Activated naive CD4-positive, alpha-beta T cell treated with anti-CD3 and anti-CD28 coated beads for 36 hours (primary cell): ENCODE measurements at regions of chr14 and their contacts with region 1.

Region 1: DNA sequence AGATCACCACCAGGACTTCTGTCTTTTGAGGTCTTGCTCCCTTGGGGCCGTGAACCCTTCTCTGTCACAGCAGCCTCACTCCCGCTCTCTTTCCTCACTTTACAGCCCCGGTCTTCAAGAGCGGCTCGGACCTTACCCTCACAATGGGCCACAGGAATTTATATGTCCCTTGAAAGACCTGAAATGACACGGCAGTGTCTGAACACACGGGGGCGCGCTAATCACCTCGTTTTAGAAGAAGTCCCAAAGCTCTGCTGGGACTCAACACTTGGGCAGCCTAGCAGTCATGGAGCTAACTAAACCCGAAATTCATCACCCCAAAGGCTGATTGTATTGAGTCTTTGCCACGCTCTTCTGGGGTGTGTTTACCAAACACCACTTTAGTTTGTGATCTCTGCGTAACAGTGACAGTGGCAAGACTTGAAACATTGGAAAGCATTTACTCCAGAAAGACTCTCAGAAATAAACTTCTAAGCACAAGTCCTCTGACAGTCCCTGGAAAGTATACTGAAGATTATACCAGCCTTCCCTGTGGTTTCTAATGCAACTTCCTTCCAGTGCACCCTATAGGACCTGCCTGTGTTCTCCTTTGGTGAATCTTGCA is 29.0 kb downstream of the SERPINA11 start:
- DNase-seq: peak; percentile 79
- H3K4me3 Mint-ChIP-seq: no peak overlapping the region
- H3K27ac Mint-ChIP-seq: no peak overlapping the region
- H3K4me1 Mint-ChIP-seq: no peaks in the 10 kb centered on the region
- H3K27me3 Mint-ChIP-seq: peaks cover 25% of the 10 kb centered on the region

Region 2: DNA sequence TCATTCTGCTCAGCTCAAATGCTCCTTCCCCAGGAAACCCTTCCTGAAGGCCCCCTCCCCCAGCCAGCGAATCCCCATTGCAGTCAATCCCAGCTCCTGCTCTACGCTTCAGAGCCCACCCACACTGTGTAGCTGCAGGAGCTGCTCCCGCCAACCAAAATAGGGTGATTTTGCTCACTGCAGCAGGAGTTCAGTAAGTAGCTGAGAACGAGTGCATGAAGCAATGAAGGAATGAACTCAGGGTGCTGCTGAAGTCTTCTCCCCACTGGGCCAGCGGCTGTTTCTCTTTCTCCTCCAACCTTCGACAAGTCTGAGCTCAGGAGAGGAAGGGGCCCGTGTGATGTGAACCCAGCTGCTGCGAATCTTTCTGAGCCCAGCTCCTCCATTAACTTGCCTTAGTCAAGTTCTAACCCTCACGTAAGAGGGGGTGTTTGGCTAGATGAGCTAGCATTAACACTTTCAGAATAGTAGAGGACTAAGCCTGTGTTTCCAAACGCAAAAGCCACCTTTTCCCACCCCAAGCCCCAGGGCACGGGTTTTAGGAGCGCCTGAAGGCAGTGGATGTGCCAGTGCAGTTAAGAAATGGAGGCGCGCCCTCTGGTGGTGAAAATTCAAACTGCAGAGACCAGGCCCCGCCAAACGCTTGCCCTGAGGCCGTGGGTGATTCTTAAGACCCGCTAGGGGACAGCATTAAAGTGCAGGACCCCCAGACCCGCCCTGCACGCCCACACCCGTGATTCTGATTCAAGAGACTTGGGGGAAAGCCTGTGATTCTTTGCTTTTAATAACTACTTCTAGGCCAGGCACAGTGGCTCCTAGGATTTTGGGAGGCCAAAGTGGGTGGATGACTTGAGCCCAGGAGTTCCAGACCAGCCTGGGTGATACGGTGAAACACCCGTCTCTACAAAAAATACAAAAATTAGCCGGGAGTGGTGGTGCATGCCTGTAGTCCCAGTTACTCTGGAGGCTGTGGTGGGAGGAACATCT is 125.7 kb after region 1 on chr14:
- CTCF ChIA-PET with region 1: interaction called, 4 read pairs
- intact Hi-C with region 1: loop called (anchors 2 kb)
- DNase-seq: peak; percentile 75
- H3K4me3 Mint-ChIP-seq: no peak overlapping the region
- H3K27ac Mint-ChIP-seq: no peak overlapping the region
- H3K4me1 Mint-ChIP-seq: no peaks in the 10 kb centered on the region
- H3K27me3 Mint-ChIP-seq: peaks cover 26% of the 10 kb centered on the region